ENCODE measurements at regions of chr5 and their contacts with region 1.

Region 1: GRCh38 chr5:161535762-161536161 is 10.8 kb downstream of the GABRB2 start:
- DNase-seq: no peak
- ATAC-seq: peak; percentile 64
- H3K4me3 ChIP-seq: no peak overlapping the region
- H3K27ac ChIP-seq: no peak overlapping the region
- H3K4me1 ChIP-seq: no peaks in the 10 kb centered on the region
- H3K27me3 ChIP-seq: no peaks in the 10 kb centered on the region
- CTCF ChIP-seq: no peak
- EP300 ChIP-seq: no peak
- POLR2A ChIP-seq: no peak
- RAD21 ChIP-seq: no peak

Region 2: GRCh38 chr5:160802592-160802991 is 733.2 kb before region 1 on chr5:
- CTCF ChIA-PET with region 1: no interaction called
- POLR2A ChIA-PET with region 1: no interaction called
- in situ Hi-C with region 1: no loop called
- intact Hi-C with region 1: loop called (anchors 5 kb)
- DNase-seq: no peak
- ATAC-seq: peak; percentile 71
- H3K4me3 ChIP-seq: no peak overlapping the region
- H3K27ac ChIP-seq: no peak overlapping the region
- H3K4me1 ChIP-seq: no peaks in the 10 kb centered on the region
- H3K27me3 ChIP-seq: no peaks in the 10 kb centered on the region
- CTCF ChIP-seq: peak; percentile 63
- EP300 ChIP-seq: no peak
- POLR2A ChIP-seq: no peak
- RAD21 ChIP-seq: no peak

Region 3: DNA sequence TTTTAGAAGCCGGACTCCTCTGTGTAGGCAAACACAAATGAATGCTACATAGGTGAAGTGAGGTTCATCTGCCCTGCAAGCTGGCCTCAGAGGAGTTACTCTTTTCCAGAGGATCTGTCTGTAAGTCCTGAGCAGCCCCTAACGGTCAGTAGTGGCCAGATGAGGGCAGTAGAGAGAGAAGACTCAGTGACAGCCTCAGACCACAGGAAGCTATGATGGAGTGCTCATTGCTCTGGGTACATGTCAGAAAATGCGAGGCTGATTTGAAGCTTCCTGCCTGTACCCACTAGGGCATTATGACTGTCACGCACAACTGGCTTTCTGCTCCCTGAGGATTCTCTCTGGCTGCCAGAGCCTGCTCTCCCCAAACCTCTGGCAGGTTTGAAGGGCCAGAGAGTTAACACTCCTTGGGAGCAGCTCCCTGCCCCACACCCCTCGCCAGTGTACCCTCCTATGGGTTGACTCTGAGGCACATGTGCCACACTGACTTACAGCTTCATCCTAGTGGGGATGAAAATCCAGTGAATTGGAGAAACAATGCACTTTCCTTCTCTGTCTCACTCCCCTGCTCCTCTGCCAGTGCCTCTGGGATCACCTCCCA is 673.3 kb after region 1 on chr5:
- CTCF ChIA-PET with region 1: no interaction called
- POLR2A ChIA-PET with region 1: no interaction called
- in situ Hi-C with region 1: no loop called
- intact Hi-C with region 1: no loop called
- DNase-seq: peak; percentile 25
- ATAC-seq: peak; percentile 89
- H3K4me3 ChIP-seq: no peak overlapping the region
- H3K27ac ChIP-seq: no peak overlapping the region
- H3K4me1 ChIP-seq: no peaks in the 10 kb centered on the region
- H3K27me3 ChIP-seq: no peaks in the 10 kb centered on the region
- CTCF ChIP-seq: peak; percentile 39
- EP300 ChIP-seq: no peak
- POLR2A ChIP-seq: no peak
- RAD21 ChIP-seq: no peak

Measured in HepG2 (cell line).